Heart right ventricle (tissue), 16 donors: ENCODE measurements at regions of chr2 and their contacts with region 1.

Region 1: GRCh38 chr2:15636972-15637785 is 45.5 kb downstream of the DDX1 start:
- DNase-seq: peak; percentile 55 to 76
- ATAC-seq: peak; percentile 82 to 94 (median 88)
- H3K4me3 ChIP-seq: no peak overlapping the region
- H3K27ac ChIP-seq: peak overlapping the region in 2 of 10 donors; percentile 27 to 35
- H3K4me1 ChIP-seq: peaks cover 6 to 61% (median 28%) of the 10 kb centered on the region in 9 donors
- H3K27me3 ChIP-seq: no peaks in the 10 kb centered on the region
- CTCF ChIP-seq: peak; percentile 62 to 96 (median 88)

Region 2: GRCh38 chr2:15599994-15600393 is 37.2 kb before region 1 on chr2:
- intact Hi-C with region 1: no loop called
- DNase-seq: no peak
- ATAC-seq: no peak
- H3K4me3 ChIP-seq: no peak overlapping the region
- H3K27ac ChIP-seq: no peak overlapping the region
- H3K4me1 ChIP-seq: peaks cover 0 to 11% (median 2%) of the 10 kb centered on the region in 9 donors
- H3K27me3 ChIP-seq: no peaks in the 10 kb centered on the region
- CTCF ChIP-seq: no peak

Region 3: DNA sequence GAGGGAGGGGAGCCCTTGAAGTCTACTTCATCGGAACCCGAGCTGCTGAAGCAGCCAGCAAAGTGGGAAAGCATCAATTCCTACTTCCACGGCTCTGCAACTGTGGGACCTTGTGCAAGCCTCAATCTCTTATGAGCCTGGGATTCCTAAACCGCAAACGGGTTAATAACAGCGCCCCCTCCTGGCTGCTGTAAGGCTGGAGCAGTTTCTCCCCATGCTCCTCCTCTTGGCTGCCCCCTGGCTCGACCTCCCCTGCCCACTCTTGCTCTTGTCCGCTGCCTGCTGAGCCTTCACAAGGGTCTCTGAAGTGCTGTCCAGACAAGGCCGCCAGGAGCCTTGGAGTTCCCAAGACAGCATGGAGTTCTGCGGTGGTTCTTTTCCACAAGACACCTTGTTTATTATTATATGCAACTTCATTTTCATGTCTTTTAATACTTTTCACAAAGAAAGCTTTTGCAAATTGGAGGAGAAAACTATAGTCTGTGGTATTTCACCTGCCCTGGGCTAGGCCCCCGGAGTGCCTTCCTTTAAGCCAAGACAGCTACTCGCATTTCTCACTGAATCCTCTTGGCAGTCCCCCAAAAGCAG is 111.7 kb after region 1 on chr2:
- intact Hi-C with region 1: loop called in 2 of 10 experiments (anchors 1 to 10 kb)
- DNase-seq: no peak
- ATAC-seq: no peak
- H3K4me3 ChIP-seq: no peak overlapping the region
- H3K27ac ChIP-seq: no peak overlapping the region
- H3K4me1 ChIP-seq: peaks cover 0 to 60% (median 35%) of the 10 kb centered on the region in 9 donors
- H3K27me3 ChIP-seq: no peaks in the 10 kb centered on the region
- CTCF ChIP-seq: peak in 8 of 9 donors; percentile 9 to 46 (median 38)

Region 4: DNA sequence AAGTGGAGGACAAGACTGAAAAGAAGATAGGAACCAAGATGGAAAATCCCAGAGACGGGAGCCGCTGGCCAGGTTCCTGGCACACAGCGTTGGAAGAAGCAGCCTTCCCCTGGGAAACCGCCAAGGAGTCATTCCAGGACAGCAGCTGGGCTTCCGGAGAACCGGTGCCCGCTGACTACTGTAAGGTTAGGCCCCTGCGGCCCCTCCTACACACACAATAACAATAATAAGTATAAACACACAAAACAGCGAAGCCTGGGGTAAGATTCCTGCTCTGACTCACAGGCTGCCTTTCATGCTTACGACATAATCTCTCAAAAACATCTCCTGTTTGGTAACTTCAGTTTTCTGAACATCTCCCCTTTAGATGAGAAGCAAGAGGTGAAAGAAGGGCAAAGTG is 275.0 kb after region 1 on chr2:
- intact Hi-C with region 1: loop called in 3 of 10 experiments (anchors 10 kb)
- DNase-seq: peak; percentile 63 to 76
- ATAC-seq: peak; percentile 34 to 92 (median 83)
- H3K4me3 ChIP-seq: peak overlapping the region in 1 of 10 donors; percentile 9
- H3K27ac ChIP-seq: peak overlapping the region in 4 of 10 donors; percentile 32 to 49 (median 40)
- H3K4me1 ChIP-seq: peaks cover 0 to 41% (median 23%) of the 10 kb centered on the region in 9 donors
- H3K27me3 ChIP-seq: no peaks in the 10 kb centered on the region
- CTCF ChIP-seq: no peak

Region 5: GRCh38 chr2:15965564-15966019 is 328.4 kb after region 1 on chr2:
- intact Hi-C with region 1: no loop called
- DNase-seq: no peak
- ATAC-seq: no peak
- H3K4me3 ChIP-seq: no peak overlapping the region
- H3K27ac ChIP-seq: no peak overlapping the region
- H3K4me1 ChIP-seq: peaks cover 0 to 5% (median 0%) of the 10 kb centered on the region in 9 donors
- H3K27me3 ChIP-seq: peaks cover 0 to 6% (median 0%) of the 10 kb centered on the region in 7 donors
- CTCF ChIP-seq: no peak

Region 6: DNA sequence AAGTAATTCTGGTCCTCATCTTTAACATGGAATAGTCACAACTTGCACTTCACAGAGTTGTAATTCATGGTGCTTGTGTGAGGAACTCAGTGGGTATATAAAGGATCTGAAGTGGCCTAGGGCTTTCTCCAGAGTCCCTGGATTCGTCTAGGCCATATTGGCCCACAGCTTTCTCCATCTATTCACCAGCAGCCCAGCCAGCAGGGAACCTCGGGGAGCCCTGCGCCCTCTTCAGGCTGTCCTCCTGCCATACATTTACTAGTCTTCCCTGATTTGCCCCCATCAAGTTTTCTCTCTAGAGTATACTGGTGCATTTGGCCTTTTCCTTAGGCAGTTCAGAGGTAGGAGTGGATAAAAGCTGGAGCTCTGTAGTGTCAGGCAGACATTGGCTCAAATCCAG is 581.4 kb after region 1 on chr2:
- intact Hi-C with region 1: loop called in 3 of 10 experiments (anchors 5 to 10 kb)
- DNase-seq: no peak
- ATAC-seq: no peak
- H3K4me3 ChIP-seq: no peak overlapping the region
- H3K27ac ChIP-seq: no peak overlapping the region
- H3K4me1 ChIP-seq: peaks cover 0 to 11% (median 4%) of the 10 kb centered on the region in 9 donors
- H3K27me3 ChIP-seq: no peaks in the 10 kb centered on the region
- CTCF ChIP-seq: peak in 7 of 9 donors; percentile 34 to 54 (median 44)

Region 7: GRCh38 chr2:16487686-16488085 is 850.5 kb after region 1 on chr2:
- intact Hi-C with region 1: loop called in 3 of 10 experiments (anchors 5 kb)
- DNase-seq: no peak
- ATAC-seq: peak in 3 of 8 donors; percentile 56 to 70 (median 62)
- H3K4me3 ChIP-seq: no peak overlapping the region
- H3K27ac ChIP-seq: no peak overlapping the region
- H3K4me1 ChIP-seq: peaks cover 0 to under 1% (median 0%) of the 10 kb centered on the region in 9 donors
- H3K27me3 ChIP-seq: peaks cover 0 to 12% (median 3%) of the 10 kb centered on the region in 7 donors
- CTCF ChIP-seq: peak in 8 of 9 donors; percentile 22 to 62 (median 50)

Region 8: GRCh38 chr2:16513626-16514025 is 876.4 kb after region 1 on chr2:
- intact Hi-C with region 1: loop called in 9 of 10 experiments (anchors 2 to 10 kb)
- DNase-seq: no peak
- ATAC-seq: no peak
- H3K4me3 ChIP-seq: no peak overlapping the region
- H3K27ac ChIP-seq: no peak overlapping the region
- H3K4me1 ChIP-seq: no peaks in the 10 kb centered on the region
- H3K27me3 ChIP-seq: peaks cover 0 to 47% (median 31%) of the 10 kb centered on the region in 7 donors
- CTCF ChIP-seq: no peak

Region 9: DNA sequence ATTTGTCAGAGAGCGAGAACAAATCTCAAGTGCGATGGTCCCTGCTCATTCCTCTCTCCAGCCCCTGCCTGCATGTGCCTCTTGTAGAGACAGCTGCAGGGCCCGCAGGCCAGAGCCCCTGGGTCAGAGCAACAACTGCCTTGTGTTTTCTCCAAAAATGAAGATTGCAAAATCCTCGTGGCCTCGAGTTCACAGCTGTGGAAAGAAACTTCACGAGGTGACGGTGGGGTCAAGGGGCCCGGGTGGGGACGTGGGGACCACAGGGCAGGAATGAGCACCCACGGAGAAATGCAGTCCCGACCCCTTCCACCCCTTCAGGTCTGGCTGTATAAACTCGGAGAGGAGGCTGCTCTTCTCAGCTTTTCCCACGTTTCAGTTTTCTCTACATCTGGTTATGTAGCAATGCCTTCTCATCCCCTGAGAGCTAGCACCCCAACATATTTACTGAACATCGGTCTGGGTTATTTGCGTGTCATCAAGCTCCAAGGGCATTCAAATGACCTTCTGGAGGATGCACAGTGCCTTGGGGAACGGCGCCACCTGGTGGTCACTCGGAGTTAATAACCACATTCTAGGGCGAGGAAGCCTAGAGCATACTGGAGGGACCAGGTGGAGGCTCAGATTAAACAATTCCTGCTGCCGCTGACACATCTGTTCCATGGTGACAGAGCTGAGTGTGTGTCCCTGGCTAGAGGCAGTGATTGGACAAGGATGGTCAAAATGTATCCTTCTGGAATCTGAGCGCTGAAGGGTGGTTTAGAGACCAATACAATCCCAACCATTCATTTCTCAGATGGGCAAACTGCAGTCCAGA is 1119.9 kb after region 1 on chr2:
- intact Hi-C with region 1: loop called in 3 of 10 experiments (anchors 5 to 10 kb)
- DNase-seq: peak; percentile 80 to 81
- ATAC-seq: peak; percentile 78 to 94 (median 92)
- H3K4me3 ChIP-seq: no peak overlapping the region
- H3K27ac ChIP-seq: peak overlapping the region in 5 of 10 donors; percentile 39 to 61 (median 57)
- H3K4me1 ChIP-seq: peaks cover 0 to 28% (median 10%) of the 10 kb centered on the region in 9 donors
- H3K27me3 ChIP-seq: peaks cover 0 to 5% (median 0%) of the 10 kb centered on the region in 7 donors
- CTCF ChIP-seq: peak; percentile 89 to 96 (median 93)